ENCODE measurements at regions of chr14 and their contacts with region 1.

Region 1: GRCh38 chr14:20682435-20683124 is 1.8 kb upstream of the RNASE4 start:
- DNase-seq: peak; percentile 83 to 87 (median 85)
- H3K4me3 ChIP-seq: peak overlapping the region; percentile 84 to 91 (median 86)
- H3K4me3 Mint-ChIP-seq: no peak overlapping the region
- H3K27ac ChIP-seq: peak overlapping the region; percentile 96 to 99
- H3K27ac Mint-ChIP-seq: no peak overlapping the region
- H3K4me1 ChIP-seq: peaks cover 61% of the 10 kb centered on the region in 2 donors
- H3K4me1 Mint-ChIP-seq: peaks cover 50% of the 10 kb centered on the region
- H3K27me3 ChIP-seq: no peaks in the 10 kb centered on the region
- H3K27me3 Mint-ChIP-seq: peaks cover 0 to 9% (median 0%) of the 10 kb centered on the region in 3 donors
- CTCF ChIP-seq: no peak

Region 2: DNA sequence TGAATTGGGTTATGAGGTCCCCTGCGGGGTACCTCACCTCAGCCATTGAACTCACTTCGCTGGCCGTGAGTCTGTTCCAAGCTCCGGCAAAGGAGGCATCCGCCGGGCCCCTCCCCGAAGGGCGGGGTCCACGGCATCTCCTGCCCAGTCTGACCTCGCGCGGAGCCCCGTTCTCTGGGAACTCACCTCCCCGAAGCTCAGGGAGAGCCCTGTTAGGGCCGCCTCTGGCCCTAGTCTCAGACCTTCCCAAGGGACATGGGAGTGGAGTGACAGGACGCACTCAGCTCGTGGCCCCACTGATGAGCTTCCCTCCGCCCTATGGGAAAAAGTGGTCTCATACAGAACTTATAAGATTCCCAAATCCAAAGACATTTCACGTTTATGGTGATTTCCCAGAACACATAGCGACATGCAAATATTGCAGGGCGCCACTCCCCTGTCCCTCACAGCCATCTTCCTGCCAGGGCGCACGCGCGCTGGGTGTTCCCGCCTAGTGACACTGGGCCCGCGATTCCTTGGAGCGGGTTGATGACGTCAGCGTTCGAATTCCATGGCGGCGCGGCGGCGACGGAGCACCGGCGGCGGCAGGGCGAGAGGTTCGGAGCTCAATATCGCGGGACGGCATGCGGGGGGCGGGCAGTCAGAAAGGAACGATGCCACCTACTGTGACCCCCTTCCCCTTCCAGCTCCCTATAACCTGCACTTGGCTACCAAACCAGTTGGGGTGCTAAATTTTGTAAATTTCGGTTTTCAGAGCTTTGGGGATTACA is 339.3 kb before region 1 on chr14 and contains the start of gene PARP2:
- intact Hi-C with region 1: loop called in 1 of 2 experiments (anchors 5 kb)
- DNase-seq: peak; percentile 97 to 99 (median 98)
- H3K4me3 ChIP-seq: peak within 1 kb of the TSS; percentile 71 to 89 (median 80)
- H3K4me3 Mint-ChIP-seq: peak within 1 kb of the TSS; percentile 95 to 96
- H3K27ac ChIP-seq: peak within 1 kb of the TSS; percentile 83 to 93
- H3K27ac Mint-ChIP-seq: peak within 1 kb of the TSS; percentile 93 to 98 (median 96)
- H3K4me1 ChIP-seq: peaks cover 11 to 14% of the 10 kb centered on the region in 2 donors
- H3K4me1 Mint-ChIP-seq: peaks cover 9% of the 10 kb centered on the region
- H3K27me3 ChIP-seq: no peaks in the 10 kb centered on the region
- H3K27me3 Mint-ChIP-seq: peaks cover 0 to 6% (median 3%) of the 10 kb centered on the region in 3 donors
- CTCF ChIP-seq: no peak
- polyA plus RNA-seq, gene PARP2: 1.8 to 7.3 (median 3.9) TPM

Region 3: GRCh38 chr14:20613094-20614037 is 69.2 kb before region 1 on chr14:
- intact Hi-C with region 1: loop called (anchors 2 kb)
- DNase-seq: peak; percentile 65 to 83 (median 81)
- H3K4me3 ChIP-seq: peak overlapping the region; percentile 45 to 69 (median 58)
- H3K4me3 Mint-ChIP-seq: no peak overlapping the region
- H3K27ac ChIP-seq: no peak overlapping the region
- H3K27ac Mint-ChIP-seq: no peak overlapping the region
- H3K4me1 ChIP-seq: peaks cover 49 to 55% of the 10 kb centered on the region in 2 donors
- H3K4me1 Mint-ChIP-seq: peaks cover 12% of the 10 kb centered on the region
- H3K27me3 ChIP-seq: no peaks in the 10 kb centered on the region
- H3K27me3 Mint-ChIP-seq: no peaks in the 10 kb centered on the region
- CTCF ChIP-seq: peak; percentile 57

Region 4: GRCh38 chr14:20632682-20633428 is 49.7 kb before region 1 on chr14:
- intact Hi-C with region 1: loop called (anchors 5 kb)
- DNase-seq: peak in 2 of 3 donors; percentile 46 to 54
- H3K4me3 ChIP-seq: peak overlapping the region in 1 of 3 experiments; percentile 64
- H3K4me3 Mint-ChIP-seq: peak overlapping the region; percentile 78 to 88
- H3K27ac ChIP-seq: no peak overlapping the region
- H3K27ac Mint-ChIP-seq: peak overlapping the region in 2 of 7 donors; percentile 27 to 28
- H3K4me1 ChIP-seq: peaks cover 30 to 34% of the 10 kb centered on the region in 2 donors
- H3K4me1 Mint-ChIP-seq: peaks cover 39% of the 10 kb centered on the region
- H3K27me3 ChIP-seq: peaks cover 77 to 96% of the 10 kb centered on the region in 2 donors
- H3K27me3 Mint-ChIP-seq: peaks cover 91 to 94% (median 92%) of the 10 kb centered on the region in 3 donors
- CTCF ChIP-seq: no peak

Region 5: GRCh38 chr14:21103710-21104447 is 421.3 kb after region 1 on chr14:
- intact Hi-C with region 1: loop called (anchors 10 kb)
- DNase-seq: peak; percentile 95 to 97 (median 96)
- H3K4me3 ChIP-seq: peak overlapping the region; percentile 43 to 84 (median 66)
- H3K4me3 Mint-ChIP-seq: peak overlapping the region; percentile 81 to 85
- H3K27ac ChIP-seq: peak overlapping the region; percentile 95 to 98
- H3K27ac Mint-ChIP-seq: peak overlapping the region; percentile 97 to 99 (median 98)
- H3K4me1 ChIP-seq: peaks cover 46 to 49% of the 10 kb centered on the region in 2 donors
- H3K4me1 Mint-ChIP-seq: peaks cover 46% of the 10 kb centered on the region
- H3K27me3 ChIP-seq: peaks cover 0 to 1% of the 10 kb centered on the region in 2 donors
- H3K27me3 Mint-ChIP-seq: peaks cover 0 to 10% (median 7%) of the 10 kb centered on the region in 3 donors
- CTCF ChIP-seq: peak; percentile 65

Region 6: GRCh38 chr14:21395444-21395843 is 712.9 kb after region 1 on chr14:
- intact Hi-C with region 1: no loop called
- DNase-seq: no peak
- H3K4me3 ChIP-seq: no peak overlapping the region
- H3K4me3 Mint-ChIP-seq: no peak overlapping the region
- H3K27ac ChIP-seq: no peak overlapping the region
- H3K27ac Mint-ChIP-seq: no peak overlapping the region
- H3K4me1 ChIP-seq: no peaks in the 10 kb centered on the region
- H3K4me1 Mint-ChIP-seq: no peaks in the 10 kb centered on the region
- H3K27me3 ChIP-seq: no peaks in the 10 kb centered on the region
- H3K27me3 Mint-ChIP-seq: no peaks in the 10 kb centered on the region
- CTCF ChIP-seq: peak; percentile 18

Measured in CD14-positive monocyte (primary cell).